Head of caudate nucleus (tissue), 42 donors: ENCODE measurements at regions of chr10 and their contacts with region 1.

Region 1: DNA sequence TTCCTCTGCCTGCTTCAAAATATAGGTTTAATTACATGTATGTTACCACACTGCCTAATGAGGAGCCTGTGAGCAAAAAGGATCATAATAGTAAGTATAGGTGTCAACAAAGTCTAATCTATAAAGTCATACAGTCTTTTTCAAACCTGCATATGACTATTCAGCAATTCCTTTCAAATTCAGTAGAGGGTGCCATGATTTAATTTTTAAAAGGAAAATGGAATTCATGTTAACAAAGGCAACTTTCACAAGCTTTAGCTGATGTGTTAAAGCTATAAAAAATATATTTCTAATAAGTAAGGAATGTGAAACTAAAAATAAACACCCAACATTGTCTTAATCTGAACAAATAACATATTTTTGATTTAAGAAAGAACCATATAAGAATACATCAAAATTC is 52.1 kb downstream of the MPP7 start:
- DNase-seq: no peak

Region 2: GRCh38 chr10:28354511-28354910 is 103.7 kb after region 1 on chr10:
- intact Hi-C with region 1: no loop called
- DNase-seq: no peak

Region 3: DNA sequence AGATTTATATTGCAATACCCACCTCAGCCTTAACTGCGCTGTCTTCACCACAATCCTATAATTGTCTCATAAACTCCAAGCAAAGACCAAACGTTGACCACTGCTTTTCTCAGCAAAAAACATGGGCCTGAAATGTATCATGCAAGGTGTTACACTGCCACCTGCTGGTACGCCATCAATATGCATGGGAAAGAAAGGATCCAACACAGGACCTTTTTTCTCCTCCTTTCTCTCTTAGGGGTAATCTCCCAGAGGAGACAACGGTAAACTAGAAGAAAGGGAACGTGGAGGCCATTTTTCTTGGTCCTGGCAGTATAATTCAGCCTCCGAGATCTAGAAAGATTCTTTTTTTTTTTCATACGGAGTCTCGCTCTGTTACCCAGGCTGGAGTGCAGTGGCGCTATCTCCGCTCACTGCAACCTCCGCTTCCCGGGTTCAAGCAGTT is 131.1 kb after region 1 on chr10:
- intact Hi-C with region 1: loop called (anchors 5 kb)
- DNase-seq: peak; percentile 8 to 93 (median 80)